ENCODE measurements at regions of chr12 and their contacts with region 1.

Region 1: GRCh38 chr12:120686690-120687577 is at the start of gene MLEC:
- DNase-seq: peak; percentile 94
- ATAC-seq: peak; percentile 87
- H3K4me3 ChIP-seq: peak within 1 kb of the TSS; percentile 83 to 91 (median 86)
- H3K27ac ChIP-seq: peak within 1 kb of the TSS; percentile 94
- H3K4me1 ChIP-seq: peaks cover 51% of the 10 kb centered on the region
- H3K27me3 ChIP-seq: no peaks in the 10 kb centered on the region
- CTCF ChIP-seq: peak; percentile 59
- EP300 ChIP-seq: no peak; a peak in 1 of 4 replicates
- POLR2A ChIP-seq: peak; percentile 65 to 91
- RAD21 ChIP-seq: peak; percentile 63
- total RNA-seq, gene MLEC: 95.5 and 156 TPM in 2 replicates

Region 2: DNA sequence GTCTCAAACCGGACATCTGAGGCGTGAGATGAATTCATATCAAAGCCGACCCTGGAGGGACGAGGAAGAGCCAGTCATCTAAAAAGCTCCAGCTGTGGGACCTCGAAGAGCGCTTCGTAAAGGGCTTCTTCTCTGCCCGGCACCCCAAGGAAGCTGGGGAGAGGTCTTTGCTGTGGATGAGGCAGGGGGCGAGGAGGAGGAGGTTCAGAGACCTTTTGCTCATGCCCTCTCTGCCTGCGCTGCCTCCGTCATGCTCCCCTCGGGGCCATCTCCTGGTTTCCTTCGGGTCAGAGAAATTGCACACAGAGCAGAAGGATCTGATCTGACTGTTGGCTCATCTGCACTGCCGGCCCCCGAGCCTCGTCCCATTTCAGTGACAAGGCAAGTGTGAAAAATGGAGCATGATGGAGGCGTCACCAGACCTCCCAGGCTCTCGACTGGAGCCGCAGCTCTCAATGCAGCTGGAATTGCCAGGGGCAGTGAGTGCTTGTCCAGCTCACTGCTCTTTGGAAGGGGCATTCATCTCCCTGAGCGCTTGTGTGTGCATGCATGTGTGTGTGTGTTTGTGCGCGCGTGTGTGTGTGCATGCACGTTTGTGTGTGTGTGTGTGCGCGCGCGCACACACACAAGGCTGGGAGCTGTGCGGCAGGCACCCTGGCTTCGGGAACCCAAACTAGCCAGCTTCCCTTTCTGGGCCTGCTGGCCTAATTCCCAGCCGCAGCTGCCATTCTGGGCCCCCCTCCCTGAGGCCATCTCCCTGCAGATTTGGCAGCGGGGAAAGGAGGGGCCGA is 37.3 kb before region 1 on chr12:
- CTCF ChIA-PET with region 1: no interaction called
- POLR2A ChIA-PET with region 1: interaction called, 3 read pairs
- in situ Hi-C with region 1: no loop called
- intact Hi-C with region 1: loop called (anchors 5 kb)
- DNase-seq: no peak
- ATAC-seq: no peak
- H3K4me3 ChIP-seq: peak overlapping the region in 1 of 3 experiments; percentile 60; a peak in 1 of 6 replicates
- H3K27ac ChIP-seq: no peak overlapping the region
- H3K4me1 ChIP-seq: peaks cover 13% of the 10 kb centered on the region
- H3K27me3 ChIP-seq: peaks cover 5 to 73% of the 10 kb centered on the region in 2 experiments; a peak in 4 of 5 replicates
- CTCF ChIP-seq: no peak
- EP300 ChIP-seq: no peak
- POLR2A ChIP-seq: no peak
- RAD21 ChIP-seq: no peak

Region 3: GRCh38 chr12:120710031-120710804 is 23.3 kb after region 1 on chr12 and contains the start of gene UNC119B:
- CTCF ChIA-PET with region 1: no interaction called
- POLR2A ChIA-PET with region 1: interaction called, 8 read pairs
- in situ Hi-C with region 1: no loop called
- intact Hi-C with region 1: loop called (anchors 2 kb)
- DNase-seq: no peak
- ATAC-seq: peak; percentile 85
- H3K4me3 ChIP-seq: peak within 1 kb of the TSS; percentile 84 to 85 (median 84)
- H3K27ac ChIP-seq: peak within 1 kb of the TSS; percentile 59
- H3K4me1 ChIP-seq: peaks cover 34% of the 10 kb centered on the region
- H3K27me3 ChIP-seq: no peaks in the 10 kb centered on the region
- CTCF ChIP-seq: no peak
- EP300 ChIP-seq: no peak
- POLR2A ChIP-seq: peak; percentile 22 to 75; a peak in 3 of 4 replicates
- RAD21 ChIP-seq: no peak
- total RNA-seq, gene UNC119B: 19.6 and 30.7 TPM in 2 replicates

Region 4: GRCh38 chr12:122078141-122079032 is 1391.5 kb after region 1 on chr12 and contains the start of gene MLXIP:
- CTCF ChIA-PET with region 1: no interaction called
- POLR2A ChIA-PET with region 1: no interaction called
- in situ Hi-C with region 1: no loop called
- intact Hi-C with region 1: loop called (anchors 5 kb)
- DNase-seq: peak; percentile 78
- ATAC-seq: peak; percentile 76
- H3K4me3 ChIP-seq: peak within 1 kb of the TSS; percentile 56 to 74 (median 62)
- H3K27ac ChIP-seq: peak within 1 kb of the TSS; percentile 50
- H3K4me1 ChIP-seq: peaks cover 58% of the 10 kb centered on the region
- H3K27me3 ChIP-seq: no peaks in the 10 kb centered on the region
- CTCF ChIP-seq: no peak
- EP300 ChIP-seq: no peak
- POLR2A ChIP-seq: peak; percentile 53 to 80; a peak in 3 of 4 replicates
- RAD21 ChIP-seq: 0 out of 2 replicates have a peak, but pooled peaks have one; percentile 26
- total RNA-seq, gene MLXIP: 4.4 and 5.3 TPM in 2 replicates

Measured in HepG2 (cell line).